ENCODE measurements at regions of chr6 and their contacts with region 1.

Region 1: DNA sequence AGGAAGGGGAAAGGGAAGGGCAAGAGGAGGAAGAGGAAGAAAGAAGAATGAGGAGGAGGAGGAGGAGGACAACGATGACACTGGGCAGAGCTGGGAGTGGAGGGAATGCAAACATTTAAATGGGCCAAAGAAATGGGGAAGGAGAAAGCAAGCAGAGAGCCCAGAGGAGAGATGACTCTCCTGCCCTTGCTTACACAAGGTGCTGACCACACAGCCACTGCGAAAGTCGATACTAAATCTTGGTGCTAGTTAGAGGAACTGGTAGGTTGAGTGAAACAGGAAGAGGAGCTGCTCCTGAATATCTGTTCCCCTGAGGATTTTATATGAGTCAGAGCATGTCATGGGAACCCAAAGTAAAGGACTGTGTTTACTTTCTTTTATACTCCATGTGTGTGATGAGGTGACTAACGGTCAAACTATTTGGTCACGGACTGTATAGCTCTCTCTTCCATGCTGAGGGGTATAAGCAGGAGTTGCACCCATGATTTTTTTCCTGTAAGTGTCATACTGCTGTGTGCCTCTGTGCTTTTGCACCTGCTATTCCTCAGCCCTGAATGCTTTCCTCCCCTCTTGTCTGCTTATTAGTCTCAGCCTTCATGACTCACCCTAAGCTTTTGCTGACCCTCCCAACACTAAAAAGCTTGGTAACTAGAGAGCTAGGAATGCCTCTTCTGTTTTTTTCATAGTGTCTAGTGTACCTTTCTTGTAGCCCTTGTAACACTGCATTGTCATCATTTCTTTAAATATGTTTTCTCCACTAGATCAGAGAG is 9.5 kb upstream of the PAQR8 start:
- DNase-seq: no peak
- ATAC-seq: peak; percentile 72
- H3K4me3 Mint-ChIP-seq: peak overlapping the region; percentile 3
- H3K27ac Mint-ChIP-seq: peak overlapping the region; percentile 31
- H3K4me1 Mint-ChIP-seq: peaks cover 29% of the 10 kb centered on the region
- H3K27me3 Mint-ChIP-seq: no peaks in the 10 kb centered on the region
- CTCF ChIP-seq: no peak

Region 2: DNA sequence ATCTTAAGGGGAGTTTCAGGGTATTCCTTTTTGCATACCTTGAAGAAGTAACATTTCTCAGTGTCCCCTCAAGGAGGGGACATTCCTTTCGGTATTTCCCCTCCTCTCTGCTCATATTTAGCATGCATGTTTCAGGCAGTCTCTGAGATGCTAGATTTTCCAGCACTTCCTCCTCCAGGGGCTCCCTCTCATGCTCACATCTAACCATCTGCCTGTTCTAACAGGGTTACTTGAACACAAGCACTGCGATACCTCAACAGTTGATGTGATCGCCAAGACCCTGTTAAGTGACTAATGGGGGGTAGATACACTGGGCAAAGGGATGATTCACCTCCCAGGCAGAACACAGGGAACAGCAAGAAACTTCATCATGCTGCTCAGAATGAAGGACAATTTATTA is 55.0 kb before region 1 on chr6:
- CTCF ChIA-PET with region 1: no interaction called
- POLR2A ChIA-PET with region 1: interaction called, 11 read pairs
- intact Hi-C with region 1: loop called (anchors 2 kb)
- DNase-seq: no peak
- ATAC-seq: peak; percentile 38
- H3K4me3 Mint-ChIP-seq: peak overlapping the region; percentile 76
- H3K27ac Mint-ChIP-seq: peak overlapping the region; percentile 99
- H3K4me1 Mint-ChIP-seq: peaks cover 38% of the 10 kb centered on the region
- H3K27me3 Mint-ChIP-seq: no peaks in the 10 kb centered on the region
- CTCF ChIP-seq: no peak

Region 3: DNA sequence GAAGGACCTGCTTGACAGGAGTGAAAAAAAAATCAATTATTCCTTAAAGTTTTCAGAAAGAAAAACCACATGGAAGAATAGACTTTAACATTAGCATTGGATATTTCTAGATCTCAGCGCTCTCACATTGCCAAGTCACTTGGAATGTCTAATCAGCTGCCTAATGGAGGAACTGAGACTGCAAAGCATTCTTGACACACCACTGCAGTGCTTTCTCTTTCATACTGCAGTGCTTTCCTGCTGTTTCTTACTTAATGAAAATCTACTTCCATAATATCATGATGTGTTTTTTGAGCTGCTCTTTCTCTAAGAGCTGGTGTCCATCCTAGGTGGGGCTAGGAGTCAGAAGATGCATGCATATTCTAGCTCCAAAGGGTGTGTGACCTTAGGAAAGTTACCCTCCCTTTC is 47.4 kb before region 1 on chr6:
- CTCF ChIA-PET with region 1: no interaction called
- POLR2A ChIA-PET with region 1: interaction called, 9 read pairs
- intact Hi-C with region 1: loop called (anchors 1 kb)
- DNase-seq: no peak
- ATAC-seq: peak; percentile 65
- H3K4me3 Mint-ChIP-seq: peak overlapping the region; percentile 67
- H3K27ac Mint-ChIP-seq: peak overlapping the region; percentile 95
- H3K4me1 Mint-ChIP-seq: peaks cover 68% of the 10 kb centered on the region
- H3K27me3 Mint-ChIP-seq: no peaks in the 10 kb centered on the region
- CTCF ChIP-seq: no peak

Region 4: GRCh38 chr6:52337633-52338290 is 14.7 kb before region 1 on chr6:
- CTCF ChIA-PET with region 1: no interaction called
- POLR2A ChIA-PET with region 1: no interaction called
- intact Hi-C with region 1: no loop called
- DNase-seq: no peak
- ATAC-seq: no peak
- H3K4me3 Mint-ChIP-seq: no peak overlapping the region
- H3K27ac Mint-ChIP-seq: no peak overlapping the region
- H3K4me1 Mint-ChIP-seq: peaks cover 17% of the 10 kb centered on the region
- H3K27me3 Mint-ChIP-seq: no peaks in the 10 kb centered on the region
- CTCF ChIP-seq: no peak

Region 5: DNA sequence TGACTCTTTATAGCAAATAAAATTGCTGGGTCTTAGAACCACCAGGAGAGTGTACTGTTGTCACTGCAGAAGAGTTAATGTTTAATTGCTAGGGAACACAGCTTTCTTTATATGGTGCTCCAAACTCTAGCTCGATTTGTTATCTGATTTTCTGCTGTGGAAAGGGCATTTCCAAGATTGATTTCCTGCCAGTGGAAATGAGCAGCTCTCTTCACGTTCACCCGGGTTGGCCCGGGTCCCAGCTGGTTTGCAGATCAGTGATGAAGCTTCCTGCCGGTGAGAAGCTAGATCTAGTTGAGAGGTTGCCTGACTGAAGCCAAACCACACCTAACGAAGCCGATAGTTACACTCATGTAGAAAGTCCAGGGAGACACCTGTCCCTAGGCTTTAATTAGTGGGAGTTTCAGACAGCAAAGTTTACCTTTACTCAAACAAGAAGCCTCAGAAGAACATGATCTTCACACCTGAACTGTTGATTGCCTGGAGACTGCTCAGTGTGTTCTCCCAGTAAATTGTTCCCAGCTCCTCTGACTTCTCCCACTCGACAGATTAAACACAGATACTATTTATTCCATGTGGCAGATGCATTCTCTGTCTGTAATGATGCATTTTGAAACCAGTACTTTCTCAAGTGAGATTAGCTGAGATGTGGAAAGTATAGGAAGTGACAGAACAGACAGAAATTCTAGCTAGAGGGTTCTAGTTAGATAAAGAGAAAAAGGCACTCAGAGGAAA is 37.4 kb after region 1 on chr6:
- CTCF ChIA-PET with region 1: no interaction called
- POLR2A ChIA-PET with region 1: interaction called, 3 read pairs
- intact Hi-C with region 1: loop called (anchors 5 kb)
- DNase-seq: no peak
- ATAC-seq: peak; percentile 26
- H3K4me3 Mint-ChIP-seq: peak overlapping the region; percentile 49
- H3K27ac Mint-ChIP-seq: peak overlapping the region; percentile 59
- H3K4me1 Mint-ChIP-seq: peaks cover 43% of the 10 kb centered on the region
- H3K27me3 Mint-ChIP-seq: no peaks in the 10 kb centered on the region
- CTCF ChIP-seq: no peak

Region 6: DNA sequence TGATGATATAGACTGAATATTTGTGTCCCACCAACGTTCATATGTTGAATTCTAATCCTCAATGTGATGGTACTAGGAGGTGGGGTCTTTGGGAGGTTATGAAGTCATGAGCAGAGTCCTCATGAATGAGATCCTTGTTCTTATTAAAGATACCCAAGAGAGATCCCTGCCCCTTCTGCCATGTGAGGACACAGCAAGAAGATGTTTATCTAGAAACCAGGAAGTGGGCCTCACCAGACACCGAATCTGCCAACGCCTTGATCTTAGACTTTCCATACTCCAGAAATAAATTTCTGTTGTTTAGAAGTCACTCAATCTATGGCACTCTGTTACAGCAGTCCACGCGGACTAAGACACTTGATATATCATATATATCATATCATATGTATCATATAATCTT is 863.9 kb after region 1 on chr6:
- CTCF ChIA-PET with region 1: no interaction called
- POLR2A ChIA-PET with region 1: no interaction called
- intact Hi-C with region 1: no loop called
- DNase-seq: no peak
- ATAC-seq: peak; percentile 69
- H3K4me3 Mint-ChIP-seq: peak overlapping the region; percentile 41
- H3K27ac Mint-ChIP-seq: peak overlapping the region; percentile 88
- H3K4me1 Mint-ChIP-seq: peaks cover 71% of the 10 kb centered on the region
- H3K27me3 Mint-ChIP-seq: no peaks in the 10 kb centered on the region
- CTCF ChIP-seq: no peak

Region 7: GRCh38 chr6:53244958-53245357 is 892.5 kb after region 1 on chr6:
- CTCF ChIA-PET with region 1: no interaction called
- POLR2A ChIA-PET with region 1: no interaction called
- intact Hi-C with region 1: no loop called
- DNase-seq: peak; percentile 42
- ATAC-seq: peak; percentile 83
- H3K4me3 Mint-ChIP-seq: peak overlapping the region; percentile 63
- H3K27ac Mint-ChIP-seq: peak overlapping the region; percentile 96
- H3K4me1 Mint-ChIP-seq: peaks cover 93% of the 10 kb centered on the region
- H3K27me3 Mint-ChIP-seq: no peaks in the 10 kb centered on the region
- CTCF ChIP-seq: no peak

Measured in activated B cell treated with CpG ODN at 0.5 μM for 24 hours (primary cell).